ENCODE measurements at regions of chr5 and their contacts with region 1.

Region 1: GRCh38 chr5:137743031-137743640 is 7.2 kb upstream of the KLHL3 start:
- DNase-seq: peak in 1 of 3 donors; percentile 73
- ATAC-seq: peak; percentile 87
- H3K4me3 ChIP-seq: no peak overlapping the region
- H3K4me1 ChIP-seq: no peaks in the 10 kb centered on the region
- CTCF ChIP-seq: peak; percentile 20

Region 2: DNA sequence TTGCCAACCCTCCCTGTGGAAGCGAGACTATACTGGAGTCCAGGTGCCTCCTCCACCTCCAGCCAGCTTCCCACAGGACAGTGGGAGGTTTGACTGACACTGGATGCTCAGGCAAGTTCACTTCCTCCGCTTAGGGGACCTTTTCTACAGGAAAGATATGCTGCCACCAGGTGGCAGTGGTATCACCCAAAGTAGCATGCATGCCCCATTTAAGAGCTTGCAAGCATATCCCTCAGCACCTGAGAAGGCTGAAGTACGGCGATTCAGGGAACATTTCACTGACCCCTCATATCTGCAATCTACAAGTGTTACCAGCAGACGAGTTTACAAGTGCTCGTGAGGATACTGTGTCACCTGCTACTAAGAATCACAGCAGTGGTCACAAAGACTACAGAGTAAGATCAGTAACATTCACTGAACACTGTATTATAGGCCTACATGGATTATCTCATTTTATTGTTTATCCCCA is 82.8 kb before region 1 on chr5:
- intact Hi-C with region 1: loop called (anchors 5 to 10 kb)
- DNase-seq: peak in 2 of 3 donors; percentile 41 to 91
- ATAC-seq: peak; percentile 91
- H3K4me3 ChIP-seq: no peak overlapping the region
- H3K4me1 ChIP-seq: no peaks in the 10 kb centered on the region
- CTCF ChIP-seq: peak; percentile 31

Measured in mucosa of descending colon (tissue), 3 donors.